AG04450 (cell line): ENCODE measurements at regions of chr21 and their contacts with region 1.

Region 1: DNA sequence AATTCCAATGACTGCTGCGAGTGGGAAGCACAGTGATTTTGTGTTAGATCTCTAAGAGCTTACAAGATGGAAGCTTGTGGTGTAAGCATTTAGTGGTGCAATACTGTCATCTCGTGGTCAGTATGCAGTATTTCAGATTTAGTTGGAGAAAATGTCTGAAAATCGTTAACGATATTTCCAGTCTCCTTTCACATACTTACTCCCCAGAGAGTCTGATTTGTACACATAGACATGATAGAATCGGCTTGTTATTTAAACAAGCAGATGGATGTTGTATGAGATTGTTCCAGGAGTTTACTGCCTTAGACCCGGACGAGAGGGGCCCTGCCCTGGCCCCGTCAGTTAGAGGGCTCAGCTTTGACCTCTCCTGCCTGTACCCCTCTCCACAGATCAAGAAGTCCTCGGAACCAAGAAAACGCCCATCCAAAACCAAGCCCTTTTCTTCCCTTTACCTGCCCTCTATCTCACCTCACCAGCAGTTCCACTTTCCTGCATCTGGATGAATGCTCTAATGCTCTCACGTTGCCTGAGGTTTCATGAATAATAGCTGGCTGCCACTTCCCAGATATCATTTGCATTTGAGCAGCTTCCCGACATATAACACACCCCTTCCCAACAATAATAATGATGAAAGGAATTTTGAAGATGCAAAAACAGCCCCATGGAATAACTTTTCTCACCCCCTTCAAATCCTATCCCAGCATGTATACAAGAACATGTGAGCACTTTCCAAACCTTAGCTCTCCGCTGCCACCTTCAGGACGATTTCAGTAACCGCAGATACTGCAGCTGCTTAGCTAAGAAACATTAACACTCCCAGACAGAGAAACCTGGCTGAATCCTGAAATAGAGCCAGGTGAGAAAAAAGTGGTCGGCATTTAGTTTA is 247.3 kb downstream of the LTN1 start:
- DNase-seq: peak; percentile 87
- H3K4me3 ChIP-seq: peak overlapping the region; percentile 46
- H3K27ac ChIP-seq: no peak overlapping the region
- H3K27me3 ChIP-seq: no peaks in the 10 kb centered on the region
- CTCF ChIP-seq: peak; percentile 96

Region 2: DNA sequence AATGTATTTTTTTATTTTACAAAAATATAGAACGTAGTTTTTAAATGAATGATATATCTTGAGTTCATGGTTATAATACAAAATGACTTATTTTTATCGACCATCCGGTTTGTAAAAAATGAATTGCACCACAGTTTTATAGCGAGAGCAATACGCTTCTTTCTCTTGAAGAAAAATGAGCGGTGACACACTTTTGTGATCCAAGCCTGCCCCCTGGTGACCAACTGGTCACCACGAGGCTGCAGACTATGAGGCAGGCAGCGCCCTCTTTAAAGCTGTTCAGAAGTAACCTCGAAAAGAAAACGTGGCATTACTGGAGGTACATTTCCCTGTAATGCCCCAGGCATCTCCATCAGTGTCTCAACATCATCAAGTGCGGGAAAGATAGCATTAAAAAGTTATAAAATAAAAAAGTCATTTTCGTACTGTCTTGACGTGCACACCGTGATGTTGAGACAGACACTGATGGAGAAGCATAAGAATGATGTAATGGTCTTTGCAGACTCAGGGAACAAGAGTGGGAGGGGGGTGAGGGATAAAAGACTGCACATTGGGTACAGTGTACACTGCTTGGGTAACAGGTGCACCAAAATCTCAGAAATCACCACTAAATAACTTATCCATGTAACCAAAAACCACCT is 1044.3 kb before region 1 on chr21:
- CTCF ChIA-PET with region 1: interaction called, 23 read pairs
- POLR2A ChIA-PET with region 1: no interaction called
- DNase-seq: peak; percentile 75
- H3K4me3 ChIP-seq: no peak overlapping the region
- H3K27ac ChIP-seq: no peak overlapping the region
- H3K27me3 ChIP-seq: no peaks in the 10 kb centered on the region
- CTCF ChIP-seq: peak; percentile 86

Region 3: DNA sequence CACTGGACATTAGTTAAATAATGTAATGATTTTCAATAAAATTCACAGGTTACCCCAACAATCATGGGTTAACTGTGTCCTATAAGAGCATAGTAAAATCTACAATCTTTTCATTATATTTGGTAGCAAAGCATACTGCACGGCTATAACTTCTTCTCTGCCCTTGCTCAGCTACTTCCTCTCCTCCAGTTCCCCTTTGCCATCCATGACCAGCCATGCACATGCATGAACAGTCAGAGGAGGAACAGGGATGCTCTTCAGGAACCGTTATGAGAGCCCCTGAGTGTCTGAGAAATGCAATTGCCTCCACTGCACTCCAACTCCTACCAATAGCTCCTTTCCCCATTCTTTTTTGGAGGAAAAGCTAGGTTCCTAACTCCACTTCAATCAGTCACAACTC is 399.4 kb before region 1 on chr21:
- CTCF ChIA-PET with region 1: interaction called, 89 read pairs
- POLR2A ChIA-PET with region 1: no interaction called
- DNase-seq: no peak
- H3K4me3 ChIP-seq: no peak overlapping the region
- H3K27ac ChIP-seq: no peak overlapping the region
- H3K27me3 ChIP-seq: no peaks in the 10 kb centered on the region
- CTCF ChIP-seq: no peak

Region 4: GRCh38 chr21:28522014-28522799 is 223.2 kb before region 1 on chr21:
- CTCF ChIA-PET with region 1: interaction called, 12 read pairs
- POLR2A ChIA-PET with region 1: no interaction called
- DNase-seq: peak; percentile 21
- H3K4me3 ChIP-seq: no peak overlapping the region
- H3K27ac ChIP-seq: no peak overlapping the region
- H3K27me3 ChIP-seq: no peaks in the 10 kb centered on the region
- CTCF ChIP-seq: peak; percentile 77

Region 5: GRCh38 chr21:28781602-28782276 is 36.4 kb after region 1 on chr21:
- CTCF ChIA-PET with region 1: interaction called, 10 read pairs
- POLR2A ChIA-PET with region 1: no interaction called
- DNase-seq: no peak
- H3K4me3 ChIP-seq: no peak overlapping the region
- H3K27ac ChIP-seq: no peak overlapping the region
- H3K27me3 ChIP-seq: no peaks in the 10 kb centered on the region
- CTCF ChIP-seq: peak; percentile 69

Region 6: DNA sequence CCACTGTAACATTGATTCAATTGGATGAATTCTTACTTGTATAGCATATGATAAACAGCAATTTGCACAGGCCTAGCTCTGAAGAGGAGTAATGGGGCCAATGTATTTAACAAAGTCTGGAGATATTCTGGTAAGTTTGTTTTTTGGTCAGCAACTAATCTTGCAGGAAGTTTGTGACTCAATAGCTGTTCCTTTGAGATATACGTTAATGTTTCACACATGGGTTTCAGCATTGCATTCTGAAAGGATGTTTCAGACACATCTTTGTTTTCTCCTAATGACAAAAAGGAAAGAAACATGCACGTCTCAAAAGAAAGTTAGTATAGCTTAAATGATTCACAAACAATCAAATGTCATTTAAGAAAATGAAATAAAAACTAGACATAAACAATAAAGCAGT is 198.3 kb after region 1 on chr21:
- CTCF ChIA-PET with region 1: interaction called, 84 read pairs
- POLR2A ChIA-PET with region 1: no interaction called
- DNase-seq: no peak
- H3K4me3 ChIP-seq: no peak overlapping the region
- H3K27ac ChIP-seq: no peak overlapping the region
- H3K27me3 ChIP-seq: no peaks in the 10 kb centered on the region
- CTCF ChIP-seq: no peak